ENCODE measurements at regions of chr2 and their contacts with region 1.

Region 1: DNA sequence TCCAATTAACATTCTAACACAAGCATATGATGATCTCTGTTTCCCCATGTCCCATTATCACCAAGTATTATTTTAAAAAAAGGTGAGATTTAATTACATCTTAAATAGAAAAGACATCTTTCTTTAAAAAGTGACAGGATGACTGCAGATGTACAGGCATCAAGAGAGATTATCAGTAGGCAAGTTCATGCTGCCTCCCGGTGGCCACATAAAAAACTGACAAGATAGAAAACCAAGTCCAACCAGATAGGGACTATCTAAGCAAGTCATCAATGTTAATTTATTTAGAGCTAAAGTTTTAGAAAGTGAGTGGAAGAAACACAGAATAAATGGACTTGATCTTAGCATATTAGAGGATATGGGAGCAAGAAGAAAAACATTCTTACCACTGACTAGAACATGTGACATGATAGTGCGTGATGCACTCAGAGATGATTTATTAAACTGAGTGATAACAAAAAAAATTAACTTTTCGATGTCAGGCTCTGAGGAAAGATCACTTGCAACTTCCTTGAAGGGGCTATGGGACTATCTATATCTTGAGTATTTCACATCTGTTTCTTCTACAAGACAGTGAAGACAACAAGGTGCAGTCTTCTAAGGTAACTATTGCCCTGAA is 5.4 kb upstream of the TDRD15 start:
- DNase-seq: peak; percentile 26
- H3K4me3 ChIP-seq: no peak overlapping the region
- H3K27ac ChIP-seq: no peak overlapping the region
- H3K4me1 ChIP-seq: no peaks in the 10 kb centered on the region
- H3K27me3 ChIP-seq: no peaks in the 10 kb centered on the region
- CTCF ChIP-seq: peak; percentile 33

Region 2: GRCh38 chr2:21042958-21043743 is 75.3 kb before region 1 on chr2:
- intact Hi-C with region 1: loop called (anchors 2 kb)
- DNase-seq: peak; percentile 43
- H3K4me3 ChIP-seq: no peak overlapping the region
- H3K27ac ChIP-seq: no peak overlapping the region
- H3K4me1 ChIP-seq: peaks cover 4% of the 10 kb centered on the region
- H3K27me3 ChIP-seq: peaks cover 4% of the 10 kb centered on the region
- CTCF ChIP-seq: peak; percentile 98

Measured in colonic mucosa (tissue), 4 donors.